Activated naive CD4-positive, alpha-beta T cell treated with anti-CD3 and anti-CD28 coated beads for 36 hours (primary cell): ENCODE measurements at regions of chr13 and their contacts with region 1.

Region 1: DNA sequence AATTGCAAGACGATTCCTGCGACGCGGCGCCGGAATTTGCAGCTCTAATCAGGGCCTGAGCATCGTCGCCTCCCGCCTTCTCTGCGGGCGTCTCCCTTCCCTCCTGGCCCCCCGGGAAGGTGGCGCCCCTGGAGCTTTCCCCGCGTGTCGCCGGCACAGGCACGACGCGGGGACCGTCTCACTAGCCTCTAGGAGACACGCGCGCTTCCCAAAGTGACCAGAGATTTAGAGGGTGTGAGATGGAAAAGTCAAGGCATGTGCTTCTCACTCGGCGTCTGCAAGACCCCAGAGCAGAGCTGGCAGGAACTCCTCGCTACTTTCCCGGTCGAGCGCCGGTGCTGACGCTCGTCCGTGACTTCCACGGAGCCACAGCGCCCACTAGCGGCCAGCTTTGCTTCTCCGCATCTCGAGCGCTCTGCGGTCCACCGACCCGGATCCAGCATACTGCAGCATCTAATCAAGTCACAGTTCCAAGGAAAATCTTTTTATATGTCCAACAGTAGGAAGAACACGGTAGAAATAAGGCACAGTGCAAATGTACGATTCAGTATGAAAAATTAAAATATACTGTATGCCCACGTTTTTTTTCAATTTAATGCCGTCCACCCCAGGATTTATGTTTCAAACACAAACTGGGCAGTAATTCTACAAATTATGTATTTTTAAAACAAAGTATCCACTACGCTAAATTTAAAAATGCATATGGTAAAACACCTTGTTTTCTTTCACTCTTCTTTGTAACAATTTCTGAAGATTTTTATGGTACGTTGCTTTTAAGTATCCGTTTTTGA is 977 bp upstream of the EFNB2 start:
- DNase-seq: peak; percentile 88
- H3K4me3 Mint-ChIP-seq: peak overlapping the region; percentile 78
- H3K27ac Mint-ChIP-seq: no peak overlapping the region
- H3K4me1 Mint-ChIP-seq: peaks cover 16% of the 10 kb centered on the region
- H3K27me3 Mint-ChIP-seq: peaks cover 26% of the 10 kb centered on the region

Region 2: DNA sequence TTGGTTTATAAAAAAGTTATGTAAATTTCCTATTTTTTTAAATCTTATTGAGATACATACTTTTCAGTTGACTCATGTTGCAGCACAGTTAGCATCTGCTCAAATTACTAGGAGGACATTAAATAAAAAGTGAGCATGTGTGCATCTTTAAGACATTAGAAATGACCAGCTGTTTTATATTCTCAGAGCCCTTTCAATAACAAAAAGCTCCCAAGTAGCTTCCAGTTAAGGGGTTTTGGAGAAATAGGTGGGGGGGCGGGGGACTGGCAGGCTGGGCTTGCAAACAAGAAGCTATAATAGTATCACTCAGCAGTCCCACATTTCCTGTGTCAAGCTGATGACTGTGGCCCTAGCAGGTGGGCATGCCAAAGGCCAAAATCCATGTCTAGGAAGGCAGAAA is 1757.1 kb before region 1 on chr13:
- CTCF ChIA-PET with region 1: interaction called, 4 read pairs
- intact Hi-C with region 1: loop called (anchors 2 kb)
- DNase-seq: no peak
- H3K4me3 Mint-ChIP-seq: no peak overlapping the region
- H3K27ac Mint-ChIP-seq: no peak overlapping the region
- H3K4me1 Mint-ChIP-seq: no peaks in the 10 kb centered on the region
- H3K27me3 Mint-ChIP-seq: no peaks in the 10 kb centered on the region

Region 3: DNA sequence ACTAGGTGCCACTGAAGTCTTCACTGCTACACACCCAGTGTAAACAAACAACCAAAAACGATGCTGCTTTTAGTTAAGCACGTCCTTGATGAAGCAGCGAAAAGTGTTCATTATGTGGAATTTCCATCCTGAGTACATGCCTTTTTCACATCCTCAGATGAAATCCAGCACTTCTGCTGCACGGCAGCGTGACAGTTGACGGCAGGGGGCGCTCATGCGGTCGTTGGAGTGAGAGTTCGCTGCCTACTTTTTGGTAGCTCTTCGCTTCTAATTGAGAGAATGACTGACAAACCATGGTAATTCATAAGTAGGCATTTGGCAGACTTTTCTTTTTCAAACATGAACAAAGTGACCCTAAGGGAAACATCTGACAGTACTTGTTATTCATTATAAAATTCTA is 1125.8 kb before region 1 on chr13:
- CTCF ChIA-PET with region 1: interaction called, 3 read pairs
- intact Hi-C with region 1: loop called (anchors 10 kb)
- DNase-seq: peak; percentile 27
- H3K4me3 Mint-ChIP-seq: no peak overlapping the region
- H3K27ac Mint-ChIP-seq: no peak overlapping the region
- H3K4me1 Mint-ChIP-seq: no peaks in the 10 kb centered on the region
- H3K27me3 Mint-ChIP-seq: no peaks in the 10 kb centered on the region

Region 4: DNA sequence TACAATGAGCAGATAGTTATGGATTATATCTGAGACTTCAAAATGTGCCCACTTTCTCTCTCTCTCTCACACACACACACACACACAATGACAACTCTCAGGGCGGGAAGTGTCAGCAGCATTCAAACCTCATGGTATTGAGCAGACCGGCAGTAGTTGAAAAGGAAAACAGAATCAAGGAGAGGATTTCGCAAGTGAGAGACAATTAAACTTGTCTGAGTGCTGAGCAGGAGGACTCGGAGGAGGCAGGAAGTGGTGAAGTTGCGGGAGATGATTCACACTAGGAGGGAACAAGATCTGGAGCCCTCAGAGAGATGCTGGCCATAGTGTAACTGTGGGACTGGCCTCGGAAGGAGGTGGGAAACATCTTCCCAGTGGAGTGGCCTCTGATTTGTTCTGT is 354.0 kb before region 1 on chr13:
- CTCF ChIA-PET with region 1: no interaction called
- intact Hi-C with region 1: loop called (anchors 10 kb)
- DNase-seq: no peak
- H3K4me3 Mint-ChIP-seq: no peak overlapping the region
- H3K27ac Mint-ChIP-seq: no peak overlapping the region
- H3K4me1 Mint-ChIP-seq: no peaks in the 10 kb centered on the region
- H3K27me3 Mint-ChIP-seq: no peaks in the 10 kb centered on the region

Region 5: GRCh38 chr13:106567474-106568298 is 31.2 kb after region 1 on chr13 and contains the start of gene ARGLU1:
- CTCF ChIA-PET with region 1: interaction called, 11 read pairs
- intact Hi-C with region 1: loop called (anchors 1 kb)
- DNase-seq: peak; percentile 96
- H3K4me3 Mint-ChIP-seq: peak within 1 kb of the TSS; percentile 99
- H3K27ac Mint-ChIP-seq: peak within 1 kb of the TSS; percentile 95
- H3K4me1 Mint-ChIP-seq: peaks cover 53% of the 10 kb centered on the region
- H3K27me3 Mint-ChIP-seq: no peaks in the 10 kb centered on the region
- total RNA-seq, gene ARGLU1: 82.3 to 86.6 TPM

Region 6: GRCh38 chr13:106917673-106918556 is 381.5 kb after region 1 on chr13:
- CTCF ChIA-PET with region 1: no interaction called
- intact Hi-C with region 1: loop called (anchors 2 kb)
- DNase-seq: peak; percentile 73
- H3K4me3 Mint-ChIP-seq: peak overlapping the region; percentile 72
- H3K27ac Mint-ChIP-seq: no peak overlapping the region
- H3K4me1 Mint-ChIP-seq: peaks cover 7% of the 10 kb centered on the region
- H3K27me3 Mint-ChIP-seq: peaks cover 44% of the 10 kb centered on the region